ENCODE measurements at regions of chr19 and their contacts with region 1.

Region 1: GRCh38 chr19:44207126-44207803 is 5.1 kb upstream of the ZNF227 start:
- DNase-seq: peak; percentile 91
- H3K4me3 ChIP-seq: peak overlapping the region; percentile 69 to 93 (median 87)
- H3K27ac ChIP-seq: peak overlapping the region; percentile 65
- H3K4me1 ChIP-seq: peaks cover 3% of the 10 kb centered on the region
- H3K27me3 ChIP-seq: no peaks in the 10 kb centered on the region
- CTCF ChIP-seq: no peak
- POLR2A ChIP-seq: peak; percentile 82

Region 2: GRCh38 chr19:44051654-44052402 is 155.4 kb before region 1 on chr19 and contains the start of gene ZNF223:
- CTCF ChIA-PET with region 1: interaction called, 3 read pairs
- POLR2A ChIA-PET with region 1: no interaction called
- dilution Hi-C with region 1: no loop called
- intact Hi-C with region 1: loop called (anchors 1 kb)
- DNase-seq: peak; percentile 91
- H3K4me3 ChIP-seq: peak within 1 kb of the TSS; percentile 48 to 64 (median 61)
- H3K27ac ChIP-seq: no peak within 1 kb of the TSS
- H3K4me1 ChIP-seq: peaks cover 11% of the 10 kb centered on the region
- H3K27me3 ChIP-seq: peaks cover 4 to 9% of the 10 kb centered on the region in 2 experiments
- CTCF ChIP-seq: no peak
- POLR2A ChIP-seq: peak; percentile 53
- total RNA-seq, gene ZNF223: 3.4 and 3.7 TPM in 2 replicates

Region 3: GRCh38 chr19:44192127-44192526 is 15.1 kb before region 1 on chr19:
- CTCF ChIA-PET with region 1: no interaction called
- POLR2A ChIA-PET with region 1: no interaction called
- dilution Hi-C with region 1: no loop called
- intact Hi-C with region 1: no loop called
- DNase-seq: no peak
- H3K4me3 ChIP-seq: no peak overlapping the region
- H3K27ac ChIP-seq: no peak overlapping the region
- H3K4me1 ChIP-seq: no peaks in the 10 kb centered on the region
- H3K27me3 ChIP-seq: no peaks in the 10 kb centered on the region
- CTCF ChIP-seq: no peak
- POLR2A ChIP-seq: no peak

Region 4: DNA sequence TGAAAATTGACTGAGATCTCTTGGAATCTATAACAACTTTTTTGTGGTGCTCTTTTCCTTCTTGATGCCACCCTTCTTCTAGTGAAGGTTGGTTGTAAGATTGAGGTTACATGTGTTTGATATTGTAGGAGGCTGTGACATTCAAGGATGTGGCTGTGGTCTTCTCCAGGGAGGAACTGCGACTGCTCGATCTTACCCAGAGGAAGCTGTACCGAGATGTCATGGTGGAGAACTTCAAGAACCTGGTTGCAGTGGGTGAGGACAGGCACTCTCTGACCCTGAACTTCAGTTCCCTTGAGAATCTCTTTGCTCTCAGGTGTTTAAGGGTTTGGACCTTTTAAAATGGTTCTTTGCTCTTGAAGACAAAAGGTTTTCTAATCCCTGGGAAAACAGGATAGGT is 21.1 kb after region 1 on chr19:
- CTCF ChIA-PET with region 1: no interaction called
- POLR2A ChIA-PET with region 1: no interaction called
- dilution Hi-C with region 1: no loop called
- intact Hi-C with region 1: no loop called
- DNase-seq: no peak
- H3K4me3 ChIP-seq: no peak overlapping the region
- H3K27ac ChIP-seq: no peak overlapping the region
- H3K4me1 ChIP-seq: no peaks in the 10 kb centered on the region
- H3K27me3 ChIP-seq: no peaks in the 10 kb centered on the region
- CTCF ChIP-seq: no peak
- POLR2A ChIP-seq: no peak

Region 5: DNA sequence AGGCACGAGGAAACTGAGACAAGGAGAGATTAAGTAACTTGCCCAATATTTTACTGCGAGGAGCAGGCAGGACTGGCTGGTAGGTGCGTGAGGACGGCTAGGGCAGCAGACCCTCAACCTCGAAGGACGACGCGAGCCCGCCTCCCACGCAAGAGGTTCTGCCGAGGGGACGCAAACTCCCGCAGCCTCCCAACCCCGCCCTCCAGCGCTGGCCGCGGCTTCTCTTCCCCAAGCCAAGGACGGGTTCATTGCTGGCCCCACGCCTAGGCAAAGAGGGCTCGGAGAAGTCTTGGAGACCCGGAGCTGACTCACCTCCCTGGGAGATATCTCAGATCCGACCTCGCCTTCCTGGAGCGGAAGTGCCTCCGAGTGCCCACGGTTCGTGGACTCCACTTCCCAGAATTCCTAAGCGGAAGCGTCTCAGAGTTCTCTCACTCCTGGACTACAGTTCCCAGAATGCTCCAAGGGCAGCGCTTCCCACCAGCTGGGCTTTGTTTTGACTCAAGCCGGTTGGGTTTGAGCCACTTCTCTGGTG is 97.5 kb after region 1 on chr19 and contains the start of gene ZNF235:
- CTCF ChIA-PET with region 1: interaction called, 5 read pairs
- POLR2A ChIA-PET with region 1: no interaction called
- dilution Hi-C with region 1: no loop called
- intact Hi-C with region 1: loop called (anchors 1 kb)
- DNase-seq: peak; percentile 97
- H3K4me3 ChIP-seq: peak within 1 kb of the TSS; percentile 76 to 95 (median 82)
- H3K27ac ChIP-seq: peak within 1 kb of the TSS; percentile 63
- H3K4me1 ChIP-seq: peaks cover 5% of the 10 kb centered on the region
- H3K27me3 ChIP-seq: no peaks in the 10 kb centered on the region
- CTCF ChIP-seq: no peak
- POLR2A ChIP-seq: peak; percentile 51
- total RNA-seq, gene ZNF235: 5.2 TPM in 2 replicates

Region 6: DNA sequence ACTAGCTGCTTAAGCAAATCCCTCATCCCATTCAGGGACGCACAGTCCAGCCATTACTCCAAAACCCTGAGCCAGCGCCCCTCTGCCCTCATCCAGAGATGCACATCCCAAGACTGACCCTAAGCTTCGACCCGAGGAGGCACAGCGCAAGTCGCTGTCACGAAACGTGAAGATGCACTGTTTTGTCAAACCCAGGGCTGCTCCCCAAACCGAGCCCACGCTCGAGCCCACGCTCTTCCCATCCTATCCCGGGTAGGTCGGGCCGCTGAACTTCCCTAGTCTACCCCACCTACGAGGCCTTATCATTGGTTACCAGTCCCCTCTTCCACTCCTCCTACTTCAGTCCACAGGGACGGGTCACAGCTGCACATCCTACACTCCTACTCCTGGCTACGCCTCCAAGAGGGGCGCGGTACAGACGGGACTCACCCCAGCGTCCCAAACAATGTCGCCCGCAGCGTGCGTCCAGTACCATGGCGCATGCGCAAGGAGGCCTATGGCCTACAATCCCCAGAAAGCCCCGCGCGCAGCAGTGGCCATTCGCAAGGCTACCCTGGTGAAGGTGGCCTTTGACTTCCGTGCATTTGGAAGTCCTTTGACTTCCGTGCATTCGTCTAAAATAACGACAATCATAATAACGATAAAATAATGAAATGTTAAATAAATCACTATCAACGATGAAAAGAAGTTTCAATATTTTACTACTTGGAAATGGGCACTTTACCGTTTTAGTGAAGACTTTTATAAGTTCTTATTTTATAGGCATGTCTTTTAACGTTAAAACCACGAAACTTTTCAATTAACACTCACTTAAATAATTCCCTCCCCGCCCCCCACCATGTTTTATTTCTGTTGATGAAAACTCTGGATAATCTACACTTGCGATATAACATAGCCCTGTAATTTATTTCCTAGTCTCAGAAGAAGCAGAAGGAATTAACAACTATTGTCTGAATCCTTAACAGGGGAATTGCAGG is 194.2 kb after region 1 on chr19 and contains the start of gene ZNF285:
- CTCF ChIA-PET with region 1: no interaction called
- POLR2A ChIA-PET with region 1: no interaction called
- dilution Hi-C with region 1: no loop called
- intact Hi-C with region 1: loop called (anchors 1 kb)
- DNase-seq: peak; percentile 98
- H3K4me3 ChIP-seq: peak within 1 kb of the TSS; percentile 46 to 66 (median 55)
- H3K27ac ChIP-seq: no peak within 1 kb of the TSS
- H3K4me1 ChIP-seq: no peaks in the 10 kb centered on the region
- H3K27me3 ChIP-seq: no peaks in the 10 kb centered on the region
- CTCF ChIP-seq: no peak
- POLR2A ChIP-seq: peak; percentile 19
- total RNA-seq, gene ZNF285: 3.6 and 4.6 TPM in 2 replicates

Region 7: GRCh38 chr19:44447916-44448674 is 240.8 kb after region 1 on chr19 and contains the start of gene ZNF229:
- CTCF ChIA-PET with region 1: no interaction called
- POLR2A ChIA-PET with region 1: no interaction called
- dilution Hi-C with region 1: no loop called
- intact Hi-C with region 1: loop called (anchors 1 kb)
- DNase-seq: peak; percentile 90
- H3K4me3 ChIP-seq: peak within 1 kb of the TSS; percentile 18 to 56 (median 49)
- H3K27ac ChIP-seq: no peak within 1 kb of the TSS
- H3K4me1 ChIP-seq: peaks cover 6% of the 10 kb centered on the region
- H3K27me3 ChIP-seq: no peaks in the 10 kb centered on the region
- CTCF ChIP-seq: no peak
- POLR2A ChIP-seq: no peak
- total RNA-seq, gene ZNF229: 6.0 and 8.8 TPM in 2 replicates